ENCODE measurements at regions of chr7 and their contacts with region 1.

Region 1: DNA sequence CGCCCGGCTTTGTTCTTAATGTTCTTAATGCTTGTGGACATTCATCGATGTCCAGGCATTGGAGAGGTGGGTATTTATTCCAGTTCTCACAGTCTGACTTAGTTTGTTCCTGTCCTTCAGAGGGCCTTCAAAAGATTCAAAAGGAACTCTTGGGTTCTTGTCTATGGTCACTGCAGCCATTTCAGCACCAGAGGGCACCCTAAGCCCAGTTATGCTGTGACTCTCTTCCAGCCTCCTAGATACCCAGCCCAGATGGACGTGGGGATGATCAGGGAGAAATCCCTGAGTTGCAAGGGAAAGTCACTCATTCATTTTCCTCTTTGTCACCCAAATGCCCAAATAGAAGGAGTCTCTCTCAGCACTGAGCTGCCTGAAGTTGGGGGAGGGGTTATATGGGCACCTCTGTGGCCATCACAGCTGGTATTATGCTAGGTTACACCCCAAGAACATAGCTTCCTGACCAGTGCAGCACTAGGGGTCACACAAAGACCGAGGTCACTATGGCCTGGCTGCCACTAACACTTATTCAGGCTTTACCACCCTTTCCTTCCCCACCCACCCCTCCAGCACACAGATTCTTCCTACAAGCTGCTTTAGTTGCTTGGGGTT is 26.5 kb upstream of the CCDC126 start:
- DNase-seq: peak; percentile 84
- H3K4me3 Mint-ChIP-seq: no peak overlapping the region
- H3K27ac Mint-ChIP-seq: no peak overlapping the region
- H3K4me1 Mint-ChIP-seq: no peaks in the 10 kb centered on the region
- H3K27me3 Mint-ChIP-seq: peaks cover 5% of the 10 kb centered on the region

Region 2: GRCh38 chr7:23696916-23697441 is 126.3 kb after region 1 on chr7:
- CTCF ChIA-PET with region 1: interaction called, 21 read pairs
- intact Hi-C with region 1: no loop called
- DNase-seq: peak; percentile 67
- H3K4me3 Mint-ChIP-seq: no peak overlapping the region
- H3K27ac Mint-ChIP-seq: no peak overlapping the region
- H3K4me1 Mint-ChIP-seq: peaks cover 1% of the 10 kb centered on the region
- H3K27me3 Mint-ChIP-seq: no peaks in the 10 kb centered on the region

Region 3: DNA sequence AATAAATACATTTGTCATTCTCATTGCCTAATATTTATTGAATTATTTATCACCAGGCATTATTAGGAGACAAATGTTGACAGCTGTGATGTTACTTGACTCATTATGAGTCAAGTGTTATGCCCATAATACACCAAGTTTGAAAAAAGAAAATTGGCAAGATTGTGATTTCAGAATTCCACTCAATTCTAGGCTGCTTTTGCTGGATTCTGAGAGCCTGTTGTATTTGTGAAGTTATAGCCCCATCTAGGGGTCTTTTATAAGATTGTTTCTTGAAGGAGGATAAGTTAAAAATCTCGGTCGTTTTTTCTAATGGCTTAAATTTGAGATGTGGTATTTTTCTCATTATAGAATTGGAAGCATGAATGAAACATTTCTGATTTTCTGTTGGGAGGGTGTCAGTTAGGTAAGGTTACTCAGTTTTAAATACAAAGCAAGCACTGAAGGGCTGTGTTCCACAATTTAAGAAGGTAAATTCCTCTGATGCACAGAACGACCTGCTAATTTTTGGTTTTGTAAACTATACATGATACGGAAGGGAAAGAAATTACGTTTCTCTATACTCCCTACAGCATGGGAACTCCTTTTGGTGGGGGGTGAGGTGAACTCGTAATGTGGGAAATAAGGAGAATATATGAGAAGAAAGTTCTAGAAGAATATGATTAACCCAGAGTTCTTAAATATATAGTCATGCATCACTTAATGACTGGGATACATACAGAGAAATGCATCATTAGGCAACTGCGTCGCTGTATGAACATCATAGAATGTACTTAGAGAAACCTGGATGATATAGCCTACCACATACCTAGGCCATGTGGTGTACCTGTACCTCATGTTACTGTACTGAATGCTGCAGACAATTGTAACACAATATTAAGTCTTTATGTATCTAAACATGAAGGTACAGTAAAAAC is 141.9 kb after region 1 on chr7:
- CTCF ChIA-PET with region 1: interaction called, 78 read pairs
- intact Hi-C with region 1: loop called (anchors 1 kb)
- DNase-seq: no peak
- H3K4me3 Mint-ChIP-seq: no peak overlapping the region
- H3K27ac Mint-ChIP-seq: no peak overlapping the region
- H3K4me1 Mint-ChIP-seq: no peaks in the 10 kb centered on the region
- H3K27me3 Mint-ChIP-seq: peaks cover 2% of the 10 kb centered on the region

Region 4: GRCh38 chr7:24283897-24284698 is 713.4 kb after region 1 on chr7 and contains the start of gene NPY:
- CTCF ChIA-PET with region 1: no interaction called
- intact Hi-C with region 1: loop called (anchors 10 kb)
- DNase-seq: peak; percentile 14
- H3K4me3 Mint-ChIP-seq: peak within 1 kb of the TSS; percentile 70
- H3K27ac Mint-ChIP-seq: no peak within 1 kb of the TSS
- H3K4me1 Mint-ChIP-seq: peaks cover 18% of the 10 kb centered on the region
- H3K27me3 Mint-ChIP-seq: peaks cover 44% of the 10 kb centered on the region
- total RNA-seq, gene NPY: not detected

Region 5: DNA sequence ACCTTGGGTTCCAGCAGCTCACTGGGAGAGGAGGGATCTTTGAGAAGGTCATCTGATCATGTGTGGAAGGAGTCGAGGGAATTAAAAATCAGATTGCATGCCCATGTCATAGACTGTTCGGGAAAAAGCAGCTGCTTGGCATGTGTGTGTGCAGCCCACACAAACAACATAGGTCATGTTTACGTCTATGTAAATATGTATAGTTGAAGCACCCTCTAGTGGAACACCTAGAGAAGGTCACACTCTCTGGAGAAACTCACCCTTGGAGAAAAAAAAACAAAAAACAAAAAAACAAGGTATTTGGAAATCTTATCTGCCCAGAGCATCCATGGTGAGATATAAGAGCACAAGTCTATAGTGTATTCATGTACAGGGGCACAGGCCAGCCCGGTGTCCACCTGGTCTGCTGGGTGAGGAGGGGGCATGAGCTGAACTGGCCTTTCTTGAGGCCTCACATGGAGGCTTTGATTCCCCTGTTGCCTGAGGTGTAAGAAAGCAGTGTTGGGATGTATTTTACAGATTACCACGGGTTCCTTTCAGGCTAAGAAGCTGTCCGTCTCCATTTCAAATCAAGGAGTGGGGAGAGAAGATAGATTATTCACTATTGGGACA is 811.3 kb after region 1 on chr7:
- CTCF ChIA-PET with region 1: no interaction called
- intact Hi-C with region 1: loop called (anchors 10 kb)
- DNase-seq: no peak
- H3K4me3 Mint-ChIP-seq: no peak overlapping the region
- H3K27ac Mint-ChIP-seq: no peak overlapping the region
- H3K4me1 Mint-ChIP-seq: no peaks in the 10 kb centered on the region
- H3K27me3 Mint-ChIP-seq: no peaks in the 10 kb centered on the region